Activated B cell treated with CpG ODN at 0.5 μM for 24 hours (primary cell): ENCODE measurements at regions of chr19 and their contacts with region 1.

Region 1: DNA sequence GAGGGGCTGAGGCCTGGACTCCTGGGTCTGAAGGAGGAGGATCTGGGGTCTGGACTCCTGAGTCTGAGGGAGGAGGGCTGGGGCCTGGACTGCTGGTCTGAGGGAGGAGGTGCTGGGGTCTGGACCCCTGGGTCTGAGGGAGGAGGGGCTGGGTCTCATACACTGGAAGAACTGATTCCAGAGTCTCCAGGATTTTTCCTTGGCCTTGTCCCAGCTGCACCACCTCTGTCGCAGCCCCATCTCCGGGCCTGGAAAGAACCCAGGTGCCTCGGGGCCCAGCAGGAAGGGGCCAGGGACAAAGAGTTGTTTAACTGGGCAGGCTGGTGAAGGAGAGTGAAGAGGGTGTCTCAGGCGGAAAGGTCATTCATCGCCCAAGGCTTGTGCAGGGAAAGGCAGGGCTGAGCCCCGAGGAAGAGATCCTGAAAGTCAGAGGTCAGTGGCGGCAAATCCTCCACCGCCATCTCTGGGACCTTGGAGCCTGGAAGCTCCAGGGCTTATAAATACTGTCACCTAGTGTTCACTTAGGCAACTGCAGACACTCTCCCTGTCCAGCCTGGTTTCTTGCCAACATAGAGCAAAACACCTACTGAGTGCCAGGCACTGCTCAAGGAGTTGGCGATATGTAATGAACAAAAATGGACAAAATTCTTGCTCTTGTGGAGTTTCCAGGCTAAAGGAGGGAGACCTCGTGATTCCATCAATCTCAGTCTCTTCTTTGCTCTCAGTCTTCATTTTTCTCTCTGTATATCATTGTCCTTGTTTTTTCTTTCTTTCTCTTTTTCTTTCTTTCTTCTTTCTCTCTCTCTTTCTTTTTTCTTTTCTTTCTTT is 4.4 kb upstream of the KCNN4 start:
- DNase-seq: no peak
- ATAC-seq: peak; percentile 13
- H3K4me3 Mint-ChIP-seq: peak overlapping the region; percentile 48
- H3K27ac Mint-ChIP-seq: peak overlapping the region; percentile 94
- H3K4me1 Mint-ChIP-seq: peaks cover 44% of the 10 kb centered on the region
- H3K27me3 Mint-ChIP-seq: no peaks in the 10 kb centered on the region
- CTCF ChIP-seq: peak; percentile 92

Region 2: DNA sequence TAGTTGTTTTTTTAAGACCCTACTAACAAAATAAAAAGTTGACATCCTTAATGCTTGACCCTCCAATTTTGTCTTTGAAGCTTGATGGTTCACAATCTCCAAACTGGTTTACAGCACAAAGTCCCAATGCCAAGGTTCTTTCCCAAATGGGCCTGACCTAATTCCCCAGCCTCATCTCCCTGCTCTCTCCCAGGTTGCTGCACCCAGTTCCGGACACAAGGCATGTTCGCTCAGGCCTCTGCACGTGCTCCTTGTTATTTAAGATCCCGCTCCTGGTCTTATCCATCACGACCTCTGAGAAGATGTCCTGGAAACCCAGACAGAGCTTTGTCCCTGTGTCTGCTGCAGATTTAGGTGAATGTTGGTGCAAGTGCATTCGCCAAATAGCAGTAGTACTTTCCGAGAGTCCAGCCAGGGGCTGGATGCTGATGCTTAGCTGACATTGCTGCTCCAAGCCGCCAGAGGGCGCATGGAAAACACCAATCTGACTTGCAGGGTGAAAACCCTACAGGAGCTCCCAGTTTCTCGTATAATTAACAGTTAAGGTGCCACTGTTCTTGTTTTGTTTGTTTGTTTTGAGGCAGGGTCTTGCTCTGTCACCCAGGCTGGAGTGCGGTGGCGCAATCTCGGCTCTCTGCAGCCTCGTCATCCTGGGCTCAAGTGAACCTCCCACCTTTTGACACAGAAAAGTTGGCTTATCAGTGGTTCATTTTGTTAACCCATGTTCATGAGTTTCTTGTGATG is 338.3 kb before region 1 on chr19:
- CTCF ChIA-PET with region 1: interaction called, 3 read pairs
- POLR2A ChIA-PET with region 1: no interaction called
- intact Hi-C with region 1: loop called (anchors 10 kb)
- DNase-seq: peak; percentile 67
- ATAC-seq: peak; percentile 90
- H3K4me3 Mint-ChIP-seq: no peak overlapping the region
- H3K27ac Mint-ChIP-seq: no peak overlapping the region
- H3K4me1 Mint-ChIP-seq: peaks cover 6% of the 10 kb centered on the region
- H3K27me3 Mint-ChIP-seq: no peaks in the 10 kb centered on the region
- CTCF ChIP-seq: peak; percentile 47

Region 3: DNA sequence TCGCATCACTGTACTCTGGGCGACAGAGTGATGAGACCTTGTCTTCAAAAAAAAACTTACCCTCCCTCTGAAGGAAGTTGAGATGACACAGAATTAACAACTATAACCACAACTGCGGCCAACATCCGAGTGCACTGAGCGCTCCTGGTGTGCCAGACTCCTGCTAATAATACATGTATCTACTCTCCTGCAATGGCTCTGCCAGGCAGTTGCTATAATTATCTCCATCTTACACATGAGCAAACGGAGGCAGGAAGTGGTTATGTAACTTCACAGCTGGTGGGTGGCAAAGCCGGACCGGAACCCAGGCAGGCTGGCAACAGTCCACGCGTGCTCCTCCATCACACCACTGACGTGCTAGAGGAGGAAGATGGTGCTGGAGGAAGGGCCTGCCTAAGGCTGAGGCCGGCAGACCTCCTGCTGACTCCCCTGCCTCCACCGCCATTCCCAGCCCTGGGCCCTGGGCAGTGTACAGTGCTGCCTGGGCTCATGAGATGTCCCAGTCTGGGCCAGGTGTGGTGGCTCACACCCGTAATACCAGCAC is 222.4 kb before region 1 on chr19:
- CTCF ChIA-PET with region 1: no interaction called
- POLR2A ChIA-PET with region 1: no interaction called
- intact Hi-C with region 1: loop called (anchors 10 kb)
- DNase-seq: peak; percentile 56
- ATAC-seq: peak; percentile 84
- H3K4me3 Mint-ChIP-seq: peak overlapping the region; percentile 56
- H3K27ac Mint-ChIP-seq: peak overlapping the region; percentile 93
- H3K4me1 Mint-ChIP-seq: peaks cover 58% of the 10 kb centered on the region
- H3K27me3 Mint-ChIP-seq: no peaks in the 10 kb centered on the region
- CTCF ChIP-seq: no peak

Region 4: DNA sequence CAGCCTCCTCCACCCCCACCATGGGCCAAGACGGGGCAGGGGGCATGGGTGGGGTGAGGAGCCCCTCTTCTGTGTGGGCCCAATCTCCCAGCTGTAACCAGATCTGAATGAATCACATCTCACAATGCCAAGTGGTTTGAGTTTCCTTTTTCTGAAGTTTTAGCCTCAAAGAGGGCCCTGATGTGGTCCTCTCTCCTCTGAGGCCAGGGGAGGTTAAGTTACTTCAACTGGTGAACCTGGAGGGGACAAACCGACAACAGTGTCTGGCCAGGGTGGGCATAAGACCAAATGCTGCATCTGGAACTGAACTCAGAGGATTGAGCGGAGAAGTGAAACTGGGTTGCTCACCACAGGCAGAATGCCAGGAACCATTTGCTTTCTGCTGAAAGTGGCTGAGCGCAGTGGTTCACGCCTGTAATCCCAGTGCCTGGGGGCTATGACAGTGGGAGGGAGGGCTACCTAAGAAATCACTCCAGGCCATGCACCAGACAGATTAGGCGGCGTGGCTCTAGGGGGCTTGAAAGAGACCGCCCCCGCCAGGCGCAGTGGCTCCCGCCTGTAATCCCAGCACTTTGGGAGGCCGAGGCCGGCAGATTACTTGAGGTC is 84.7 kb before region 1 on chr19:
- CTCF ChIA-PET with region 1: no interaction called
- POLR2A ChIA-PET with region 1: interaction called, 3 read pairs
- intact Hi-C with region 1: loop called (anchors 1 kb)
- DNase-seq: peak; percentile 21
- ATAC-seq: peak; percentile 30
- H3K4me3 Mint-ChIP-seq: peak overlapping the region; percentile 85
- H3K27ac Mint-ChIP-seq: peak overlapping the region; percentile 90
- H3K4me1 Mint-ChIP-seq: peaks cover 30% of the 10 kb centered on the region
- H3K27me3 Mint-ChIP-seq: peaks cover 9% of the 10 kb centered on the region
- CTCF ChIP-seq: no peak

Region 5: GRCh38 chr19:43711751-43712355 is 73.3 kb before region 1 on chr19:
- CTCF ChIA-PET with region 1: no interaction called
- POLR2A ChIA-PET with region 1: no interaction called
- intact Hi-C with region 1: no loop called
- DNase-seq: no peak
- ATAC-seq: no peak
- H3K4me3 Mint-ChIP-seq: no peak overlapping the region
- H3K27ac Mint-ChIP-seq: no peak overlapping the region
- H3K4me1 Mint-ChIP-seq: no peaks in the 10 kb centered on the region
- H3K27me3 Mint-ChIP-seq: peaks cover 15% of the 10 kb centered on the region
- CTCF ChIP-seq: no peak

Region 6: GRCh38 chr19:43754503-43755255 is 30.5 kb before region 1 on chr19 and contains the start of gene SMG9:
- CTCF ChIA-PET with region 1: interaction called, 14 read pairs
- POLR2A ChIA-PET with region 1: interaction called, 661 read pairs
- intact Hi-C with region 1: loop called (anchors 1 kb)
- DNase-seq: peak; percentile 97
- ATAC-seq: peak; percentile 74
- H3K4me3 Mint-ChIP-seq: peak within 1 kb of the TSS; percentile 90
- H3K27ac Mint-ChIP-seq: peak within 1 kb of the TSS; percentile 98
- H3K4me1 Mint-ChIP-seq: peaks cover 81% of the 10 kb centered on the region
- H3K27me3 Mint-ChIP-seq: no peaks in the 10 kb centered on the region
- CTCF ChIP-seq: no peak
- total RNA-seq, gene SMG9: 91.2 and 105 TPM in 2 replicates

Region 7: GRCh38 chr19:43809762-43810696 is 24.8 kb after region 1 on chr19:
- CTCF ChIA-PET with region 1: interaction called, 3 read pairs
- POLR2A ChIA-PET with region 1: no interaction called
- intact Hi-C with region 1: loop called (anchors 1 kb)
- DNase-seq: no peak
- ATAC-seq: peak; percentile 49
- H3K4me3 Mint-ChIP-seq: no peak overlapping the region
- H3K27ac Mint-ChIP-seq: no peak overlapping the region
- H3K4me1 Mint-ChIP-seq: no peaks in the 10 kb centered on the region
- H3K27me3 Mint-ChIP-seq: peaks cover 14% of the 10 kb centered on the region
- CTCF ChIP-seq: no peak

Region 8: DNA sequence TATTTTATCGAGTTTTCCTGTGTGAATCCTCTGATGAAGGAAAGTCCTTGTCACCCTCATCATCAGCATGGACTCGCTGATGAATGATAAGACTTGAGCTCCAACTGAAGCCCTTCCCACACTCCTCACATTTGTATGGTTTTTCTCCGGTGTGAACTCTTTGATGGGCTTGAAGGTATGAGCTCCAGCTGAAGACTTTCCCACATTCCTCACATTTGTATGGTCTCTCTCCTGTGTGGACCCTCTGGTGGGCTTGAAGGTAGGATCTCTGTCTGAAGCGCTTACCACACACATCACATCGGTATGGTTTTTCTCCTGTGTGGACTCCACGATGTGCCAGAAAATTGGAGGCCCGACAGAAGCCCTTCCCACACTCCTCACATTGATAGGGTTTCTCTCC is 128.2 kb after region 1 on chr19:
- CTCF ChIA-PET with region 1: no interaction called
- POLR2A ChIA-PET with region 1: no interaction called
- intact Hi-C with region 1: no loop called
- DNase-seq: no peak
- ATAC-seq: no peak
- H3K4me3 Mint-ChIP-seq: no peak overlapping the region
- H3K27ac Mint-ChIP-seq: no peak overlapping the region
- H3K4me1 Mint-ChIP-seq: no peaks in the 10 kb centered on the region
- H3K27me3 Mint-ChIP-seq: no peaks in the 10 kb centered on the region
- CTCF ChIP-seq: no peak